ENCODE measurements at regions of chr14 and their contacts with region 1.

Region 1: DNA sequence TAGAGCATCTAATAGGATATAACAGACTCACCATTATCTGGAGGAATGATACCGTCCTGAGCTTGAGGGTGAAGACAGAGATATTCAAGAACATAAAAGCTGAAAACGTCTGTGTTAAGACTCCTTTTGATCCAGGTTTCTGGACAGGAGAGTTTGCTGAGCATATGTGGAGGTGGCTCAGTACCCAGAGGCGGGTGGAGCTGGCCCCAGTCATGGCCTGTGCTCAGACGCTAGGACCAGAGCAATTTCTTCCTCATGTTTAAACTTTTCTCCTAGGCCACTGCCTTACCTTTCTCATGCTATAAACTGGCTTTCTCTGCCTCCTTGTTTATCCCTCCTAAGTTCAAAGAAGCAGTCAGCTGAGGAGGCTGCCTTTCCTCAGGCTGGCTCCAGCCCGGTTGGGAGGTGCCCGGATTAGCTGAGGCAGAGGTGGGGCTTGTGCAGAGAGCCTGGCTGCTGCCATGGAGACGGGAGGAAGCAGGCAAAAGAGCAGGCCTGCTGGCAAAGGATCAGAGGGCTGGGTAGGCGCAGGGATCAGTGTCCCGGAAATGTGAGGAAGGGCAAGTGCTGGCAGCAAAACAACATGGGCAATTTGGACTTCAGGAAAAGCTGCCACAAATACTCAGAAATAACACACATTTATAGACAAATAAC is 13.7 kb downstream of the COA8 start:
- DNase-seq: peak; percentile 91
- H3K4me3 Mint-ChIP-seq: peak overlapping the region; percentile 13
- H3K27ac Mint-ChIP-seq: peak overlapping the region; percentile 82
- H3K4me1 Mint-ChIP-seq: peaks cover 17% of the 10 kb centered on the region
- H3K27me3 Mint-ChIP-seq: no peaks in the 10 kb centered on the region
- CTCF ChIP-seq: no peak

Region 2: GRCh38 chr14:103512701-103513611 is 63.5 kb before region 1 on chr14:
- CTCF ChIA-PET with region 1: no interaction called
- POLR2A ChIA-PET with region 1: no interaction called
- intact Hi-C with region 1: no loop called
- DNase-seq: peak; percentile 89
- H3K4me3 Mint-ChIP-seq: peak overlapping the region; percentile 55
- H3K27ac Mint-ChIP-seq: peak overlapping the region; percentile 84
- H3K4me1 Mint-ChIP-seq: peaks cover 19% of the 10 kb centered on the region
- H3K27me3 Mint-ChIP-seq: no peaks in the 10 kb centered on the region
- CTCF ChIP-seq: no peak

Region 3: GRCh38 chr14:103530390-103530789 is 46.1 kb before region 1 on chr14:
- CTCF ChIA-PET with region 1: no interaction called
- POLR2A ChIA-PET with region 1: no interaction called
- intact Hi-C with region 1: no loop called
- DNase-seq: no peak
- H3K4me3 Mint-ChIP-seq: peak overlapping the region; percentile 90
- H3K27ac Mint-ChIP-seq: no peak overlapping the region
- H3K4me1 Mint-ChIP-seq: peaks cover 8% of the 10 kb centered on the region
- H3K27me3 Mint-ChIP-seq: no peaks in the 10 kb centered on the region
- CTCF ChIP-seq: no peak

Region 4: GRCh38 chr14:103628684-103629502 is 52.4 kb after region 1 on chr14 and contains the start of gene KLC1:
- CTCF ChIA-PET with region 1: interaction called, 4 read pairs
- POLR2A ChIA-PET with region 1: interaction called, 6 read pairs
- intact Hi-C with region 1: loop called (anchors 2 kb)
- DNase-seq: peak; percentile 72
- H3K4me3 Mint-ChIP-seq: peak within 1 kb of the TSS; percentile 83
- H3K27ac Mint-ChIP-seq: peak within 1 kb of the TSS; percentile 89
- H3K4me1 Mint-ChIP-seq: peaks cover 13% of the 10 kb centered on the region
- H3K27me3 Mint-ChIP-seq: no peaks in the 10 kb centered on the region
- CTCF ChIP-seq: no peak
- total RNA-seq, gene KLC1: 216 and 220 TPM in 2 replicates

Region 5: DNA sequence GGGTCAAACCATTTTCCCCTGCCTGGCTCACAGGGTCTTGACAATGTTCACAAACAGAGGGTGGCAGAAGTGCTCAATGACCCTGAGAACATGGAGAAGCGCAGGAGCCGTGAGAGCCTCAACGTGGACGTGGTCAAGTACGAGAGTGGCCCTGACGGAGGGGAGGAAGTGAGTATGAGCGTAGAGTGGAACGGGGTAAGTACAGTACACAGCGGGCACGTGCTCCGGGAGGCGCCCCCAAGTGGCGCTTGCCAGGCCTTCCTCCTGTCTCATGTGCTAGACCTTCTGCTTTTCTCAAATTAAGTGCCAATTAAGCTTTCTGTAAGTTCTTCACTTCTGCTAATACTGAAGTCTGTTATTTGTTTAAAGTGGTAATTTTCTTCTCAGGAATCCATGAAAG is 102.9 kb after region 1 on chr14:
- CTCF ChIA-PET with region 1: interaction called, 3 read pairs
- POLR2A ChIA-PET with region 1: no interaction called
- intact Hi-C with region 1: loop called (anchors 10 kb)
- DNase-seq: no peak
- H3K4me3 Mint-ChIP-seq: no peak overlapping the region
- H3K27ac Mint-ChIP-seq: no peak overlapping the region
- H3K4me1 Mint-ChIP-seq: no peaks in the 10 kb centered on the region
- H3K27me3 Mint-ChIP-seq: no peaks in the 10 kb centered on the region
- CTCF ChIP-seq: peak; percentile 10

Region 6: DNA sequence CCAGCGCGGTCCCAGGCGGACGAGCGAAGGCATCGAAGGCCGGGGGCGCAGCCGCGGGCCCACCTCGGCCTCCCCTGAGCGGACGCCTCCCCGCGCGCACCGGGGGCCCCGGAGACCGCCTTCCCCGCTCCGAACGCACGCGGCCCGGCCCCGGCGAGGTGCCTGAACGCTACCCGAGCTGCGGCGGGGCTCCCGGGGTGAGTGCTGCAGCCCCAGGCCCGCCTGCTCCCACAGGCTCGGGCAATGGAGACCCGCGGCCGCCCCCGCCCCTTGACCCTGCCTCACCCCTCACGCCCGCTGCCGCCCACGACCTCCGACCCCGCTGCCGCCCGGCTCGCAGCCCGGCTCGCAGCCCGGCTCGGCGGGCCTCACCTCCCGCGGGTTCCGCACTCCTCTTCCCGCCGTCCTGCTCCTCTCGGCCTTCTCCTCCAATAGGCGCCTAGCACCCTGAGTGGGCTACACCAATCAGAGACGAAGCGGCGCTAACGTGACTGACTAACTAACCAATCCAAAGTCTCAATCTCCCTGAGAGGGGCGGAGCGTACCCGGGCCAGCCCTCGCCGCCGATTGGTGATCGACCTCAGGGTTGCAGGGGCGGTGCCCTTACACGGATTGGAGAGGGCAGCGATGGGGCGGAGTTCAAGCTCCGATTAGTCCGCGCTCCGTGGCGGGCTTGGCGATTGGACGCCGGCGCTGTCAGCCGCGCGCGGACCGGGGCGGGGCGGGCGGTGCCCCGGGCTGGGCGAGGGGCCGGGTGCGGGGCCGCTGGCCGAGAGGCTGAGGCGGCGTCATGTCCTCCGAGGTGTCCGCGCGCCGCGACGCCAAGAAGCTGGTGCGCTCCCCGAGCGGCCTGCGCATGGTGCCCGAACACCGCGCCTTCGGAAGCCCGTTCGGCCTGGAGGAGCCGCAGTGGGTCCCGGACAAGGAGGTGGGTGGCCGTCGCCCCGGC is 138.8 kb after region 1 on chr14 and contains the starts of genes XRCC3 and ZFYVE21:
- CTCF ChIA-PET with region 1: interaction called, 6 read pairs
- POLR2A ChIA-PET with region 1: no interaction called
- intact Hi-C with region 1: loop called (anchors 10 kb)
- DNase-seq: peak; percentile 100
- H3K4me3 Mint-ChIP-seq: peak within 1 kb of the TSS; percentile 94
- H3K27ac Mint-ChIP-seq: peak within 1 kb of the TSS; percentile 87
- H3K4me1 Mint-ChIP-seq: peaks cover 38% of the 10 kb centered on the region
- H3K27me3 Mint-ChIP-seq: no peaks in the 10 kb centered on the region
- CTCF ChIP-seq: no peak
- total RNA-seq, gene XRCC3: 9.4 and 17.5 TPM in 2 replicates
- total RNA-seq, gene ZFYVE21: 28.6 and 35.5 TPM in 2 replicates